ENCODE measurements at regions of chr6 and their contacts with region 1.

Region 1: GRCh38 chr6:151323791-151324487 is 67.4 kb downstream of the ZBTB2 start:
- DNase-seq: peak; percentile 97
- H3K4me3 ChIP-seq: no peak overlapping the region
- H3K27ac ChIP-seq: peak overlapping the region; percentile 71 to 93 (median 82)
- H3K4me1 ChIP-seq: peaks cover 0 to 37% (median 27%) of the 10 kb centered on the region in 4 donors
- H3K27me3 ChIP-seq: no peaks in the 10 kb centered on the region
- CTCF ChIP-seq: peak; percentile 98 to 99 (median 98)
- EP300 ChIP-seq: peak in 3 of 4 donors; percentile 39 to 75 (median 71)
- POLR2A ChIP-seq: no peak

Region 2: DNA sequence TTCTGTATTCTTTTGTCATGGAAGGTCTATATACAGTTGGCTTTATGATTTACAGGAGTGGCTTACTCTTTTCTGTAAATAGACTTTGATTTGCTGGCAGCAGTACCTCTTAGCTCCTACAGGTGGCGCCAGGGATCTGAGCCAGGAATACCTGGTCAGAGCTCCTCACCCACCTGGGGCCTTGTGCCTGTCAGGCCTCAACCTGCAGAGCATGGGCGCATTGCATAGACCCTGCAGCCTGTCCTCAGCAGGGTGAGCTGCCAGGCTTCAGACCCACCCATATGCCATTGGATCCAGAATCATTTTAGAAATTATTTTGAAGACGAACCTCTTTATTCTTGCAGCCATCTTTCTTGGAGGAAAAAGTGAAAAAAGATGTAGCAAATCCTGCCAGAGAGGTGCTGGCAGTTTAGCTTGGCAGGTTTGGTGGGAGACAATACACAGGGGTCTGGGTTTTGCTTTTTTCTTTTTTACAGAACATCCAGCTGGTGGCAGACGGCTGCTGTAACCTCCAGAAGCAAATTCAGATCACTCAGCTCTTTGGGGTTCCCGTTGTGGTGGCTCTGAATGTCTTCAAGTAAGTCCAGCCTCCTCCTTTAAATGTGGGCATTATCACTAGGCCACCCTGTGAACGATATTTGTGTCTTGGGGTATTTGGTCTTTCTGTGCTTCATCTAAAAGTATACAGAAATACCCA is 309.4 kb before region 1 on chr6:
- intact Hi-C with region 1: loop called (anchors 1 kb)
- DNase-seq: peak; percentile 89
- H3K4me3 ChIP-seq: peak overlapping the region in 1 of 4 donors; percentile 11
- H3K27ac ChIP-seq: peak overlapping the region in 3 of 4 donors; percentile 11 to 62 (median 50)
- H3K4me1 ChIP-seq: peaks cover 0 to 18% (median 2%) of the 10 kb centered on the region in 4 donors
- H3K27me3 ChIP-seq: no peaks in the 10 kb centered on the region
- CTCF ChIP-seq: peak; percentile 89 to 100 (median 97)
- EP300 ChIP-seq: no peak
- POLR2A ChIP-seq: no peak

Region 3: GRCh38 chr6:151121900-151122299 is 202.0 kb before region 1 on chr6:
- intact Hi-C with region 1: loop called (anchors 5 kb)
- DNase-seq: peak; percentile 80
- H3K4me3 ChIP-seq: no peak overlapping the region
- H3K27ac ChIP-seq: peak overlapping the region in 2 of 4 donors; percentile 48 to 68
- H3K4me1 ChIP-seq: peaks cover 0 to 73% (median 37%) of the 10 kb centered on the region in 4 donors
- H3K27me3 ChIP-seq: no peaks in the 10 kb centered on the region
- CTCF ChIP-seq: no peak
- EP300 ChIP-seq: no peak
- POLR2A ChIP-seq: no peak

Measured in sigmoid colon (tissue), 7 donors.